ENCODE measurements at regions of chr14 and their contacts with region 1.

Region 1: GRCh38 chr14:31084385-31084784 is 58.2 kb upstream of the STRN3 start:
- DNase-seq: no peak
- ATAC-seq: no peak

Region 2: DNA sequence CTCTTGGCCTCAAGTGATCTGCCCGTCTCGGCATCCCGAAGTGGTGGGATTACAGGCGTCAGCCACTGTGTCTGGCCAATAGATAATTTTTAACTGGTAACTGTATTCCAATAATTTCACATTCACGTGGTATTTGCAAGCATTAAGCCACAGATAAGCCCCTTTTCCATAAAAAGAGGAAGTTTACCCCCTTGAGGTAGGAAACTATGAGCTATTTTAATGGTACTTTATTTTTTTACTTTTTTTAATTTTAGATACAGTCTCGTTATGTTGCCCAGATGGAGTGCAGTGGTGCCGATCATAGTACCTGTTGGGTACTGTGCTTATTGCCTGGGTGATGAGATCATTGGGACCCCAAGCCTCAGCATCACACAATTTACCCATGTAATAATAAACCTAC is 101.9 kb before region 1 on chr14:
- intact Hi-C with region 1: loop called (anchors 2 to 5 kb)
- DNase-seq: no peak
- ATAC-seq: no peak

Measured in left cardiac atrium (tissue), 4 donors.